Activated CD8-positive, alpha-beta T cell treated with anti-CD3 and anti-CD28 coated beads for 36 hours (primary cell): ENCODE measurements at regions of chr11 and their contacts with region 1.

Region 1: GRCh38 chr11:78045851-78046485 is 17.7 kb upstream of the THRSP start:
- DNase-seq: peak; percentile 79
- ATAC-seq: peak; percentile 96
- H3K4me3 Mint-ChIP-seq: peak overlapping the region; percentile 50
- H3K27ac Mint-ChIP-seq: no peak overlapping the region
- H3K4me1 Mint-ChIP-seq: peaks cover 18% of the 10 kb centered on the region
- H3K27me3 Mint-ChIP-seq: no peaks in the 10 kb centered on the region
- CTCF ChIP-seq: peak; percentile 98

Region 2: DNA sequence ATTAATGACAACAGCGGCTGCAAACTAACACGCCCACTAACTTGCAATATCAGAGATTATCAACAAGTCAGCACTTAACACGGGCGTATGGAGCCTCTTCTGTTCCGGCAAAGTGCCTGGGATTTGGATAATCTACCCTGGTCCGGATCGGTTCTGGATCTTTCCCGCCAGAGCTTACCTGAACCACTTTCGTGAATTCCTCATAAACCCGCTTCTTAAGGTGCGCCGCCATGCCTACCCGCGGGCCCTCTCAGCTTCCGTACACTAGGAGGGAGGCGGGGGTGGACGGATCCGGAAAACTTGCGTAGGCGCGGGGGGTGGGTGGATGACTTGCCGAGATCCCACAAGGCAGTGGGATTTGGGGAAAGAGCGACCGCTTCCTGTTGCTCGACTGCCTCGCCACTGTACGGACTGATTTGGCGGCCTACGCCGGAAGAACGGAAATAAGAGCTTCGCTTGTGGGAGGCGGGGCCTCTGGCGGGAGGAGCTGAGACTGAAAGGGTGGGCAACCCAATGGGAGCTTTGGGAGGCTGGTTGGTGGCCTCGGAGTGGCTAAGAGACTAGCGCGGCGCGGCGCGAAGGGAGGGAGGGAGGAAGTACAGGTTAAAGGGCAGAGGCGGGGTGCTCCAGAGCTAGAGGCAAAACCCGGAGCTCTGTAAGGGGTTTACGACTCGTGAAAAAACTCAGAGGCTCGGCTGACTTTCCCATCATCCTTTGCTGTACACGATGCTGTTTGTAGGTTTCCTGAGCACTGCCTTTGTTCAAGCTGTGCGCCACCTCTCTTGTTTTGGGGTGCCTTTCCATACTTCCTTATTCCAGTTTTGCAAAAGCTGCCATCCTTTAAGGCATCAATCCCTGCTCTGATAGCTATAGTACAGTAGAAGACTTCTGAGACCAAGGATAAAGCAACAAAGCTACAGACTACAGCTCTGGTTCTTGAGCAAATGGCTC is 51.3 kb before region 1 on chr11 and contains the start of gene INTS4:
- CTCF ChIA-PET with region 1: interaction called, 40 read pairs
- POLR2A ChIA-PET with region 1: interaction called, 4 read pairs
- intact Hi-C with region 1: no loop called
- DNase-seq: peak; percentile 99
- ATAC-seq: peak; percentile 99
- H3K4me3 Mint-ChIP-seq: peak within 1 kb of the TSS; percentile 97
- H3K27ac Mint-ChIP-seq: peak within 1 kb of the TSS; percentile 96
- H3K4me1 Mint-ChIP-seq: peaks cover 17% of the 10 kb centered on the region
- H3K27me3 Mint-ChIP-seq: no peaks in the 10 kb centered on the region
- CTCF ChIP-seq: no peak
- total RNA-seq, gene INTS4: 44.4 to 45.8 TPM

Region 3: GRCh38 chr11:78010310-78010709 is 35.7 kb before region 1 on chr11:
- CTCF ChIA-PET with region 1: interaction called, 19 read pairs
- POLR2A ChIA-PET with region 1: no interaction called
- intact Hi-C with region 1: no loop called
- DNase-seq: no peak
- ATAC-seq: no peak
- H3K4me3 Mint-ChIP-seq: no peak overlapping the region
- H3K27ac Mint-ChIP-seq: no peak overlapping the region
- H3K4me1 Mint-ChIP-seq: no peaks in the 10 kb centered on the region
- H3K27me3 Mint-ChIP-seq: peaks cover 1% of the 10 kb centered on the region
- CTCF ChIP-seq: no peak

Region 4: GRCh38 chr11:78030429-78031325 is 15.3 kb before region 1 on chr11:
- CTCF ChIA-PET with region 1: interaction called, 26 read pairs
- POLR2A ChIA-PET with region 1: interaction called, 5 read pairs
- intact Hi-C with region 1: no loop called
- DNase-seq: no peak
- ATAC-seq: no peak
- H3K4me3 Mint-ChIP-seq: no peak overlapping the region
- H3K27ac Mint-ChIP-seq: no peak overlapping the region
- H3K4me1 Mint-ChIP-seq: peaks cover 4% of the 10 kb centered on the region
- H3K27me3 Mint-ChIP-seq: no peaks in the 10 kb centered on the region
- CTCF ChIP-seq: no peak

Region 5: GRCh38 chr11:78070621-78071020 is 24.7 kb after region 1 on chr11:
- CTCF ChIA-PET with region 1: interaction called, 11 read pairs
- POLR2A ChIA-PET with region 1: no interaction called
- intact Hi-C with region 1: no loop called
- DNase-seq: no peak
- ATAC-seq: no peak
- H3K4me3 Mint-ChIP-seq: no peak overlapping the region
- H3K27ac Mint-ChIP-seq: no peak overlapping the region
- H3K4me1 Mint-ChIP-seq: peaks cover 10% of the 10 kb centered on the region
- H3K27me3 Mint-ChIP-seq: no peaks in the 10 kb centered on the region
- CTCF ChIP-seq: no peak